ENCODE measurements at regions of chr13 and their contacts with region 1.

Region 1: GRCh38 chr13:80132741-80133601 is 208.0 kb downstream of the SPRY2 start:
- DNase-seq: peak in 1 of 2 donors; percentile 55
- ATAC-seq: peak; percentile 81
- H3K4me3 ChIP-seq: peak overlapping the region; percentile 0 to 21
- H3K27ac ChIP-seq: peak overlapping the region; percentile 66 to 84
- H3K4me1 ChIP-seq: peaks cover 0 to 1% of the 10 kb centered on the region in 2 donors
- H3K27me3 ChIP-seq: no peaks in the 10 kb centered on the region

Region 2: GRCh38 chr13:79519255-79519654 is 613.7 kb before region 1 on chr13:
- intact Hi-C with region 1: no loop called
- DNase-seq: no peak
- ATAC-seq: no peak
- H3K4me3 ChIP-seq: no peak overlapping the region
- H3K27ac ChIP-seq: no peak overlapping the region
- H3K4me1 ChIP-seq: no peaks in the 10 kb centered on the region
- H3K27me3 ChIP-seq: no peaks in the 10 kb centered on the region

Region 3: GRCh38 chr13:79775830-79776229 is 357.1 kb before region 1 on chr13:
- intact Hi-C with region 1: loop called in 1 of 2 experiments (anchors 10 kb)
- DNase-seq: no peak
- ATAC-seq: no peak
- H3K4me3 ChIP-seq: no peak overlapping the region
- H3K27ac ChIP-seq: no peak overlapping the region
- H3K4me1 ChIP-seq: peaks cover 0 to 2% of the 10 kb centered on the region in 2 donors
- H3K27me3 ChIP-seq: no peaks in the 10 kb centered on the region

Region 4: DNA sequence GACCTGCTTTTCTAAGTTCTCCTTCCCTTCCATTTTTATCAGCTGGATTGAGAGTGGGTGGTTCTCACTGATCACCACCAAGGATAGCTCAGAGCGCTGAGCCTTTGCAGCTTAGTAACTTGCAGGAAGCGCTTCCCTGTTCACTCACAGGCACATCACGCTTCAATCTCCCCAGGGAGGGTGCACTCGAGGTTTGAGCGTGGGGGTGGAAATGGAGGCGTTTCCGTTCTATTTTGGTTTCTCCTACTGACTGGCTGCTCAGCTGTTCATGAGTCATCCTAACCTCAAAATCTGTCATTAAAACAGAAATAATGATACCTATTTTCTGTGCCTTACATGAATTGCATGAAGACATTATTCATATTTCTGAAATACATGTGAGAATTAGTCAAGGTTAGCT is 84.2 kb before region 1 on chr13:
- intact Hi-C with region 1: loop called in 1 of 2 experiments (anchors 5 kb)
- DNase-seq: peak; percentile 91 to 94
- ATAC-seq: peak; percentile 89
- H3K4me3 ChIP-seq: no peak overlapping the region
- H3K27ac ChIP-seq: no peak overlapping the region
- H3K4me1 ChIP-seq: peaks cover 0 to 5% of the 10 kb centered on the region in 2 donors
- H3K27me3 ChIP-seq: no peaks in the 10 kb centered on the region

Region 5: GRCh38 chr13:80083853-80084676 is 48.9 kb before region 1 on chr13:
- intact Hi-C with region 1: loop called (anchors 5 to 10 kb)
- DNase-seq: no peak
- ATAC-seq: peak; percentile 73
- H3K4me3 ChIP-seq: peak overlapping the region in 1 of 2 donors; percentile 18
- H3K27ac ChIP-seq: peak overlapping the region; percentile 71 to 82
- H3K4me1 ChIP-seq: peaks cover 0 to 8% of the 10 kb centered on the region in 2 donors
- H3K27me3 ChIP-seq: no peaks in the 10 kb centered on the region

Measured in aorta (tissue), 5 donors.